Astrocyte of the cerebellum (primary cell): ENCODE measurements at regions of chr16 and their contacts with region 1.

Region 1: DNA sequence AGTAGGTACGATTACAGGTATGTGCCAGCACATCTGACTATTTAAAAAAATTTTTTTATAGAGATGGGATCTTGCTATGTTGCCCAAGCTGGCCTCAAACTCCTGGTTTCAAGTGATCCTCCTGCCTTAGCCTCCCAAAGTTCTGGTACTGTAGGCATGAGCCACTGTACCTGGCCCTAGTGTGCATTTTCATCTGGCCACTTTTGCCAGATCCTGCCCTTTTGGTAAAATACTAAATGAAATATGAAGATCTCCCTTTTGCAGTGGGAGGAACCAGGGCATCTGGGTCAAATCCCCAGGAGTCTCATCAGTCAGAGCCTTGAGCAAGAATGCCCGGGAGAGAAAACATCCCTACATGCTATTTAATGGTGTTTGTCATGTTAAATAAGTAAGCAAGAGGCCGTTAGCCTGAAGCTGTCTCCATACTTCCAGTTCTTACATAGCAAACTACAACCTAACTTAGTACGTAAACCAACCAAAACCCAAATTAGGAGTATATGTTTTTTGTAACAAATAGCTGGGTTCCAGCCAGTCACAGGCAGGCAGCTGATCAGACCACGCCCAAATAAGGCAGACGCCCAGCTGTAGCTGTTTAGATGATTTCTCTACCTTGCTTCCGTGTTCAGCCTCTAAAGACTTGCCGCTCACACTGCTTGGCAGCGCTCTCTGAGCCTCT is 46.5 kb upstream of the CLEC18A start:
- DNase-seq: no peak
- H3K4me3 ChIP-seq: no peak overlapping the region
- CTCF ChIP-seq: no peak

Region 2: DNA sequence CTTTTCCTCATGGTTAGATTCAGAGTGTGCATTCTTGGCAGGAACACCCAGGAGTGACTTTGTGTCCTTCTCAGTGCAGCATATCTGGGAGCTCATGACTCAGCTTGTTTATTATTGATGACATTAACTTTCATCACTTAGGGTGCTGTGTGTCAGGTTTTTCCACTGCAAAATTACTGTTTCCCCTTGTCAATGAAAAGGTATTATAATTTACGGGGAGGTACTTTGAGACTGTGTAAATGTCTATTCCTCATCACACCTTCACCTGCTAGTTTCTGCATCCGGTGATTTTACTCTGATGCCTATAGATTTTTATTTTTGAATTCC is 92.0 kb before region 1 on chr16:
- in situ Hi-C with region 1: loop called (anchors 5 kb)
- DNase-seq: no peak
- H3K4me3 ChIP-seq: no peak overlapping the region
- CTCF ChIP-seq: no peak